Common myeloid progenitor, CD34-positive (primary cell): ENCODE measurements at regions of chr2 and their contacts with region 1.

Region 1: DNA sequence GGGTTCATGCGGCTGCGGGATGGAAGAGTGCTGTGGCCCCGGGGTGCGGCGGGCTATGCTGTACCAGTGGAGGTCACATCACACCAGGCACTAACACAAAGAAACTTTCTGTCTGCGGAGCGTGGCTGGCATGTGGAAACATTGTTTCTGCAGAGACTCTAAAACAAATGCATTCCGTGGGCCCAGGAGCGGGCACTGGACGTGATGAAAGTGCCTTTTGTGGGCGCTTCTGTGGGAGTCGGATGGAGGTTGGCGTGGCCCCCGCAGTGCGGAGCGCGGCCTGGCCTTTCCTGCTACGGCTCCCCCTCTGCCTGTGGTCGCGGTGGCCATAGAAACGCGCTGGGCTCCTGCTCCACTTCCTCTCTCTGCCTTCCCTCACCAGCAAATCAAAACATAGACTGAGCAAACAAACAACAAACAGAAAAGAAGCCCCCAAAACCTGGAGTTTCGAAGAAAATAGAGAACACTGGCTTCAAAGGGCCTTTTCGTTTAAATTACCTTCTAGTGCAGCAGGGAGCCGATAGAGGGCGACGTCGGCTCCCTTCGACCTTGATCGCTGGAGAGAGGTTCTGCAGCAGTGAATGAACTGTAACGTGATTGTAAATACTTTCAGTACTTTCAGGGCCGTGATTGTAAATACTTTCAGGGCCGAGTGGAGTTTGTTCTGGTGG is 51.4 kb downstream of the KIF5C start:
- DNase-seq: peak; percentile 50 to 74 (median 72)
- H3K4me3 ChIP-seq: peak overlapping the region in 6 of 7 experiments; percentile 10 to 58 (median 41)
- H3K27ac ChIP-seq: no peak overlapping the region
- H3K4me1 ChIP-seq: peaks cover 0 to 12% (median 12%) of the 10 kb centered on the region in 4 experiments
- H3K27me3 ChIP-seq: no peaks in the 10 kb centered on the region

Region 2: DNA sequence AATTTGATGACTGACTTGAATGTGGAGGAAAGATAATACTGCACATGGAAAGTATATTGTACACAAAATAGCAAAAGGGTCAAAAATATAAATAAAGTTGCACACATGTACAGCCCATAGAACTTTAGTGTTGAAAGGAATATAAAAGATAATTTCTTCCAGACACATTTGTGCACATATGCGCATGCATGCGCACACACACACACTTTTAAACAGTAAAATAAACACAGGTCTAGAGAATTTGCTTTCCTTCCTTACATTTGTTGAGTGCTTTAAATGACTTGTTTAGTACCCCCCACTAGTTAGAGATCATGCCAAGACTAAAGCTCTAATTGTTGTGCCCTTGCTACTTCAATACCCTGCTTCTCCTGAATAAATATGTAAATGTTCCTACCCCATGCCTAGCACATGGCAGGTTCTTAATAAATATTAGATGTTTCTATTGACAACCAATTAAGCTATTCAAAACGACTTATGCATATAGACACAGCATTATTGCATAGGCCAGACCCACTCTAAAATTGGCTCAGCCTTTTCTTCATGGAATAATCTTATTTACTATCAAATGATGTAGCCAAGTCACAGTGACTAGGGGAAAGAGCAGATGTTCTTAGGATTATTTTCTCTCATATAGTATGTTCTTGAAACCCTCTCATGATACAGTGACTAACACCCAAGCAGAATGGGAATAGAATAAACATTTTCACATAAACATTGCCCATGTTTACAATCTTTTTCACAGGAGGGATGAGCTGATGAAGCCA is 1247.1 kb before region 1 on chr2:
- CTCF ChIA-PET with region 1: no interaction called
- POLR2A ChIA-PET with region 1: no interaction called
- DNase-seq: no peak
- H3K4me3 ChIP-seq: no peak overlapping the region
- H3K27ac ChIP-seq: no peak overlapping the region
- H3K4me1 ChIP-seq: no peaks in the 10 kb centered on the region
- H3K27me3 ChIP-seq: no peaks in the 10 kb centered on the region

Region 3: DNA sequence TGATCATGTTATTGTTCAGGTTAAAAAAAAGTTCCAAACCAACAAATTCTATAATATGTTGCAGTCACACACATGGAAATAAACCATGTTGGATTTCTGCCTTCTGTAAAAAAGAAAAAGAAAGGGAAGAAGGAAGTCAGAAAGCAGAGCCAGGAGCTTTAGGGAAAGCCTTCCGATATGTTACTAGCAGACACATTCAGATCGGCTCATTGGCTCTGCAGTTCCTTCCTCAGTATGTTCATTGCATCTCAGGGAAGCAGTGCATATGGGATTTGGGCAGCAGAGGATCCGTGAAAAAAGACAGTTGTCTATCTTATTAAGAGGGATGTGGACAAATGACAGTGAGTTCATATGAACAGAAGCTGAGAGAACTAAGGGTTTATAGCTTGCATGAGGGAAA is 16.7 kb after region 1 on chr2:
- CTCF ChIA-PET with region 1: interaction called, 11 read pairs
- POLR2A ChIA-PET with region 1: no interaction called
- DNase-seq: no peak
- H3K4me3 ChIP-seq: no peak overlapping the region
- H3K27ac ChIP-seq: no peak overlapping the region
- H3K4me1 ChIP-seq: peaks cover under 1 to 13% (median 5%) of the 10 kb centered on the region in 4 experiments
- H3K27me3 ChIP-seq: no peaks in the 10 kb centered on the region